HEK293 (cell line): ENCODE measurements at regions of chr17 and their contacts with region 1.

Region 1: GRCh38 chr17:45948881-45949624 is 50.0 kb upstream of the STH start:
- H3K4me3 ChIP-seq: no peak overlapping the region; the same call in 1 of the 2 replicates
- H3K27ac ChIP-seq: no peak overlapping the region
- H3K4me1 ChIP-seq: no peaks in the 10 kb centered on the region
- CTCF ChIP-seq: peak; percentile 75

Region 2: GRCh38 chr17:45961206-45961605 is 12.2 kb after region 1 on chr17:
- CTCF ChIA-PET with region 1: interaction called, 14 read pairs
- POLR2A ChIA-PET with region 1: interaction called, 3 read pairs
- H3K4me3 ChIP-seq: no peak overlapping the region
- H3K27ac ChIP-seq: no peak overlapping the region
- H3K4me1 ChIP-seq: no peaks in the 10 kb centered on the region; the same call in 1 of the 2 replicates
- CTCF ChIP-seq: no peak

Region 3: GRCh38 chr17:45971698-45972141 is 22.7 kb after region 1 on chr17:
- CTCF ChIA-PET with region 1: interaction called, 10 read pairs
- POLR2A ChIA-PET with region 1: no interaction called
- H3K4me3 ChIP-seq: no peak overlapping the region
- H3K27ac ChIP-seq: no peak overlapping the region
- H3K4me1 ChIP-seq: no peaks in the 10 kb centered on the region
- CTCF ChIP-seq: no peak